ENCODE measurements at regions of chr11 and their contacts with region 1.

Region 1: GRCh38 chr11:95175818-95176368 is 55.1 kb downstream of the SESN3 start:
- DNase-seq: no peak
- CTCF ChIP-seq: no peak

Region 2: DNA sequence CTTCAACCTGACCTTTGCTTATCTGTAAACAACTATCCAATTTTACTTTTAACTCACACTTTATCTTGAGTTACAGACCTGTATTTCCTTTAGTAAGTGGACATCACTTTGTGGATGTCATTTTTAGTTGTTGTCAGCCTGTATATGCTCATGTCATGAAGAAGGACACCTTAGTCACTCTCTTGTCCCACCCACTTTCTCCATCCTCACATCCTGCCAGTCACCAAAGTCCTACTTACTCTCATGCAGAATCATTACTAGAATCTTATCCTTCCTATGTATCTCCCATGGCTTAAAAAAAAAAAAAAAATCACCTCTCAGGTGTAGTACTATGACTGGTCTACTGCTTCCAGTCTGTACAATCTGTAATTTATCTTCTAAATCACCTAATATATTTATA is 11.8 kb after region 1 on chr11:
- CTCF ChIA-PET with region 1: interaction called, 10 read pairs
- POLR2A ChIA-PET with region 1: no interaction called
- DNase-seq: no peak
- CTCF ChIP-seq: no peak